Dendritic cell treated with granulocyte-macrophage colony-stimulating factor and Interleukin-4, amounts not matched to agents 40 ng/mL and 50 ng/mL, for 4 days (primary cell): ENCODE measurements at regions of chr6 and their contacts with region 1.

Region 1: DNA sequence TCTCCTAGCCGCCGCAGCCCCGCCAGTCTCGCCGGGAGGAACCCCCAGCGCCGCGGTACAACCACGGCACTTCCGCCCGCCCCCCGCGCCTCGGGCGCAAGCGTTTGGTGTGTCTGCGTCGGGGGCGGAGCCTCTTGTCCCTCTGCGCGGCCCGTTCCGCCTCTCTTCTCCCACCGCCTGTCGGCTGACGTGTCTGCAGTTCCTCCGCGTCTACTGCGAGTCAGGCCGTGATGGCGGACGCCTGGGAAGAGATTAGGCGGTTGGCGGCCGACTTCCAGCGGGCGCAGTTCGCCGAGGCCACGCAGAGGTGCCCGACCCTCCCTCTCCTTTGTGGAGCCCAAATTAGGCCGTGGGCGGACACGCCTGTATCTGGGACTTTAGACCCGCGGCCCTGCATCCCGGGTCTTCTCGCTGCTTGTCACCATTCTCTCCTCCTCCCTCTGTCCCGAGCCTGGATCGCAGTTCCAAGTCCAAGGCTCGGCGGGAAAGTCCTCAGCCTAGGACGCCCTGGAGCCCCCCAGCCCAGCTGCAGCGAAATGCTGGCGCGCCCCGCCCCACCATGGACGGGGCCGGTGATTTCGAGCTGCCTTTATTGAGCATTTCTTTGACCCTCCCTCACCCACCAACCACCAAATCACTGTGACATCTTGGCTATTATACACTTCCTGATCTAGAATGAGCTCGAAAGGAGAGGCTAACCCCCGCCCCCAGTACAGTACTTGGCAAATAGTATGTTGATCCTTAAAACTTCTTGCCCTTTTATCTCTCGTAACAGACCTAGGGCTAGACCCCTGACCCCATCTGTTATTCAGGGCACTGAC is at the start of gene UFL1:
- H3K4me3 Mint-ChIP-seq: peak within 1 kb of the TSS; percentile 100
- H3K27ac Mint-ChIP-seq: peak within 1 kb of the TSS; percentile 100
- H3K4me1 Mint-ChIP-seq: peaks cover 18% of the 10 kb centered on the region
- H3K27me3 Mint-ChIP-seq: no peaks in the 10 kb centered on the region

Region 2: DNA sequence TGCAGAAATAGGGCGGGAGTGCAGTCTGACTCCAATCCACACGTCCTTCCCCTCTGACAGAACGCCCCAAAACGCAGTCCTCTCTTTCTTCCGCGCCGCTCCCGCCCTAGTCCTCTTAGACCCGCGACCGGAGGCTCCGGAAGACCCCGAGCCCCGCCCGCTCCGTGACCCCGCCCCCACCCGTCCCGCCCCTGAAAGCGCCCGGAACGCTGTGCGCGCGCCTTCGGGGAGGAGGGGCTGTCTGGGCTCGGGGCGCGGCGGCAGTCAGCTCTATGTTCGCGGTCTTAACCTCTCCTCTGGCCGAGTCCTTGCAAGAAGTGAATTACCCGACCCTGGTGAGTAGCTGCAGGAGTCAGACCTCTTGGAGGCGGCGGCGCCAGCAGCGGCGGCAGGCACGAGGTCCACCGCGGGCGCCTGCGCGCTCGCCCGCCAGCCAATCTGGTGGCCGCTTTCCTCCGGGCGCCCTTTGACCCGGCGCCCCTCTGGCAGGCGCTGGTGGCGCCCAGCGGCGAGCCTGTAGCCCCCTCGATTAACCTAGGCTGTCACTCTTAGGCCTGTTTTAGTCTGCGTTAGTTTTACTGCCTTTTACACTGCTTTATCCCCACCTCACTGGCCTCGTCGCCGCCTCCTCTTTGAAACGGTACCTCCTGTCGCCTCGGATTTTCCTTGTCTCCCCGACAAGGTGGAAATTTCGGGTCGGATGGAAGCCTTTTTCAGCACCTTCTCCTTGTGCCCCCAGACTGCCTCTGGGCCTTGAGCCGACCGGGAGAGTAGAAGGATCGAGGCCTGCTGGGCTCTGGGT is 944.3 kb before region 1 on chr6 and contains the start of gene MANEA:
- intact Hi-C with region 1: loop called (anchors 5 kb)
- H3K4me3 Mint-ChIP-seq: peak within 1 kb of the TSS; percentile 87
- H3K27ac Mint-ChIP-seq: peak within 1 kb of the TSS; percentile 94
- H3K4me1 Mint-ChIP-seq: peaks cover 25% of the 10 kb centered on the region
- H3K27me3 Mint-ChIP-seq: no peaks in the 10 kb centered on the region

Region 3: GRCh38 chr6:96897383-96898240 is 375.8 kb after region 1 on chr6 and contains the start of gene NDUFAF4:
- intact Hi-C with region 1: loop called (anchors 1 kb)
- H3K4me3 Mint-ChIP-seq: peak within 1 kb of the TSS; percentile 91
- H3K27ac Mint-ChIP-seq: peak within 1 kb of the TSS; percentile 97
- H3K4me1 Mint-ChIP-seq: peaks cover 21% of the 10 kb centered on the region
- H3K27me3 Mint-ChIP-seq: peaks cover 4% of the 10 kb centered on the region

Region 4: GRCh38 chr6:97059473-97059872 is 537.6 kb after region 1 on chr6:
- intact Hi-C with region 1: no loop called
- H3K4me3 Mint-ChIP-seq: no peak overlapping the region
- H3K27ac Mint-ChIP-seq: no peak overlapping the region
- H3K4me1 Mint-ChIP-seq: no peaks in the 10 kb centered on the region
- H3K27me3 Mint-ChIP-seq: peaks cover 4% of the 10 kb centered on the region

Region 5: GRCh38 chr6:97282726-97283617 is 761.1 kb after region 1 on chr6 and contains the start of gene MMS22L:
- intact Hi-C with region 1: loop called (anchors 5 kb)
- H3K4me3 Mint-ChIP-seq: peak within 1 kb of the TSS; percentile 95
- H3K27ac Mint-ChIP-seq: peak within 1 kb of the TSS; percentile 91
- H3K4me1 Mint-ChIP-seq: no peaks in the 10 kb centered on the region
- H3K27me3 Mint-ChIP-seq: no peaks in the 10 kb centered on the region